ENCODE measurements at regions of chr6 and their contacts with region 1.

Region 1: DNA sequence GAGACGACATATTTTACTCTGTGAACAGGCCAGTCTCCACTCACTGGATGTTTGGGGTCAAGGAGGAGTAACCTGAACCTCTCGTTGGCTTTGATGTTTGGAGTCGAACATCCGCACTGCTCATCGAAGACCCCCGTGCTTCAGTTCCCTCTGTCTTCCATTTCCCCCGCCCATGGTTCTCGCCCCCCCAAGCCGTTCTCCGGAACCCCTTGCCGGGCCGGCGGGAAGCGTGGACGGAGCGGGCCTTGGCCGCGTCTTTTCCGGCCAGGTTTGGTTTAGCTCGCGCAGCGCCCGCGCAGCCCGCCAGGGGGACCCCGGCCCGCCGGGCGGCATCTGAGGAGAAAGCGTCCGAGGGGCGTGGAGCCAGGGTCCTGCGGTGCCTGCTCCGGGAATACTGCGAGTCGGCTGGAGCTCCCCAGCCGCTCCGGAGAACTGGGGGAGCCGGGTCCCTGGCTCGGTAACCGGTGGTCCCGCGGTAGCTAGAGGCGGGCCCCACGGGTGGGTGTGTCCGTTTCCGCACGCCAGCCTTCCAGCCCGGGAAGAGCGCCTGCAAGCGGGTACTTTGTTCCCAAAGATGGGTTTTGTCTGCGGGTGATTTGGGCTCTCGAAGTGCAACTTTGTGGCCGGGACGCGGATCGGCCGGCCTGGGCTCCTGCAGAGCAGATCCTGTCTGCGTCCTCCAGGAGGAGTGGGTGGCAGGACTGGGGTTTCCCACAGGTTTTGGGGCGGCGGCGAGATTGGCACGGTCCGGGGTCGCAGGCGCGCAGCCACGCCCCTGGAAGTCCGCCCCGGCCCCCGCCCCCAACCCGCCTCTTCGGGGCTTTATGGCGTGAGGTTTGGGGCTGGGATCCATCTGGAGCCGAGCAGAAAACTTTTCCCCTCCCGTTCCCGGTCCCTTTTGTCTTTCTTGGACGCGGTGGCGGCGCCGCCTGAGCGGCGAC is at the start of gene TMEM200A:
- DNase-seq: peak; percentile 31
- H3K4me3 Mint-ChIP-seq: peak within 1 kb of the TSS; percentile 70
- H3K27ac Mint-ChIP-seq: no peak within 1 kb of the TSS
- H3K4me1 Mint-ChIP-seq: peaks cover 14% of the 10 kb centered on the region
- H3K27me3 Mint-ChIP-seq: peaks cover 19% of the 10 kb centered on the region
- total RNA-seq, gene TMEM200A: not detected

Region 2: GRCh38 chr6:129795261-129795660 is 570.2 kb before region 1 on chr6:
- CTCF ChIA-PET with region 1: no interaction called
- intact Hi-C with region 1: no loop called
- DNase-seq: no peak
- H3K4me3 Mint-ChIP-seq: no peak overlapping the region
- H3K27ac Mint-ChIP-seq: no peak overlapping the region
- H3K4me1 Mint-ChIP-seq: peaks cover 4% of the 10 kb centered on the region
- H3K27me3 Mint-ChIP-seq: peaks cover 7% of the 10 kb centered on the region

Region 3: GRCh38 chr6:130138116-130138908 is 227.1 kb before region 1 on chr6:
- CTCF ChIA-PET with region 1: no interaction called
- intact Hi-C with region 1: loop called (anchors 5 kb)
- DNase-seq: peak; percentile 27
- H3K4me3 Mint-ChIP-seq: peak overlapping the region; percentile 55
- H3K27ac Mint-ChIP-seq: peak overlapping the region; percentile 84
- H3K4me1 Mint-ChIP-seq: peaks cover 57% of the 10 kb centered on the region
- H3K27me3 Mint-ChIP-seq: no peaks in the 10 kb centered on the region

Region 4: DNA sequence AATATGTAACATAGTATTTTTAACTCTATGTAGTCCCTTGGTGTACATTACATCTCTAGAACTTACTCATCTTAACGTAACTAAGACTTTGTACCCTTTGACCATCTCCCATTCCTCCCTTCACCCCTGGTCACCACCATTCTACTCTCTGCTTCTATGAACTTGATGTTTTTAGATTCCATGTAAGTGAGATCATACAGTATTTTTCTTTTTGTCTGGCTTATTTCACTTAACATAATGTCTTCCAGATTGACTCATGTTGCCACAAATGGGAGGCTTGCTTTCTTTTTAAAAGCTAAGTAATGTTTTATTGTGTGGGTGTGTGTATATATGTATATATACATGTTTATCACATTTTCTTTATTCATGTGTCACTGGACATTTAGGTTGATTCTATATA is 56.1 kb after region 1 on chr6:
- CTCF ChIA-PET with region 1: no interaction called
- intact Hi-C with region 1: no loop called
- DNase-seq: no peak
- H3K4me3 Mint-ChIP-seq: no peak overlapping the region
- H3K27ac Mint-ChIP-seq: no peak overlapping the region
- H3K4me1 Mint-ChIP-seq: no peaks in the 10 kb centered on the region
- H3K27me3 Mint-ChIP-seq: no peaks in the 10 kb centered on the region

Region 5: GRCh38 chr6:130697995-130698535 is 332.6 kb after region 1 on chr6:
- CTCF ChIA-PET with region 1: no interaction called
- intact Hi-C with region 1: loop called (anchors 1 kb)
- DNase-seq: peak; percentile 79
- H3K4me3 Mint-ChIP-seq: no peak overlapping the region
- H3K27ac Mint-ChIP-seq: no peak overlapping the region
- H3K4me1 Mint-ChIP-seq: peaks cover 19% of the 10 kb centered on the region
- H3K27me3 Mint-ChIP-seq: no peaks in the 10 kb centered on the region

Measured in activated naive CD4-positive, alpha-beta T cell treated with anti-CD3 and anti-CD28 coated beads for 36 hours (primary cell).